WTC11 (cell line): ENCODE measurements at regions of chr13 and their contacts with region 1.

Region 1: GRCh38 chr13:110915057-110915873 is at the start of gene ANKRD10:
- DNase-seq: peak; percentile 99
- ATAC-seq: peak; percentile 93
- H3K4me3 Mint-ChIP-seq: peak within 1 kb of the TSS; percentile 92
- H3K27ac Mint-ChIP-seq: peak within 1 kb of the TSS; percentile 92
- H3K4me1 Mint-ChIP-seq: peaks cover 41% of the 10 kb centered on the region
- H3K27me3 Mint-ChIP-seq: no peaks in the 10 kb centered on the region
- CTCF ChIP-seq: peak; percentile 58; the same call in 1 of the 2 replicates
- total RNA-seq, gene ANKRD10: 176 to 219 TPM (median 191 TPM) in 3 replicates

Region 2: DNA sequence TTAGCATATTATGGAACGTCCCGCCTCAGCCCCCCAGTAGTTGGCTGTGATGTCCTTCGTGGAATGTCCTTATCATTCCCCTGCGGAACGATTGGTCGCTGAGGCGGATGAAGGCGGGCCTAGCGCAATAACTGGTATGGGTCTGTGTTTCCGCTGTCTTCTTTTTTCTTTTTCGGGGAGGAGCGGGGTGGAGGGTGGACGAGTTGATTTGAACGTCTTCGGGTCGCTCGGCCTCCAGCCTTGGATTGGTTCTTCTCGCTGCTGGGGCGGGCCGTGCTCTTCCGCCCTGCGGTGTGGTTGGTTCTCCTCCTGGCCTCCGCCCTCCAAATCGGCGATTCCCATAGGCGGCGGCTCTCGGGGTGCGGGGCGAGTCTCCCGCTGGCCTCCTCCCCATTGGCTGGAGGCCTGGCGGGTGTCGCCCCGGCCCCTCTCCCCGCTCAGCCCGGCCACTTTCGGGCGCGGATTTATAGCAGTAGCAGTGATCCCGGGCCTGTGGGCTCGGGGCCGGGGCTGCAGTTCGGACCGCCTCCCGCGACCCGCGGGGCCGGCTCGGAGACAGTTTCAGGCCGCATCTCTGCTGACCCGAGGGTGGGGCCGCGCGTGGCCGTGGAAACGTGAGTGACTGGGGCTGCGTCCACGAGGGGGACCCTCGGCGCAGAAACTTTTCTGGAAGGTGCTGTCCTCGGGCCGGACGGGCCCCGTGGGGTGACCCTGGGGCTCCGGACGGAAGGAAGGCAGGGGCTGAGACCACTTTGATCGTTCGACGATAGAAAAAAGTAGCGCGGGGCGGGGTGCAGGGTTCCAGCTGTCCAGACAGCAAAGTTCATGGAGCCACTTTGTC is 199.7 kb before region 1 on chr13:
- CTCF ChIA-PET with region 1: interaction called, 6 read pairs
- POLR2A ChIA-PET with region 1: interaction called, 16 read pairs
- DNase-seq: peak; percentile 97
- ATAC-seq: peak; percentile 71
- H3K4me3 Mint-ChIP-seq: peak overlapping the region; percentile 96
- H3K27ac Mint-ChIP-seq: peak overlapping the region; percentile 99
- H3K4me1 Mint-ChIP-seq: peaks cover 23% of the 10 kb centered on the region
- H3K27me3 Mint-ChIP-seq: no peaks in the 10 kb centered on the region
- CTCF ChIP-seq: no peak

Region 3: DNA sequence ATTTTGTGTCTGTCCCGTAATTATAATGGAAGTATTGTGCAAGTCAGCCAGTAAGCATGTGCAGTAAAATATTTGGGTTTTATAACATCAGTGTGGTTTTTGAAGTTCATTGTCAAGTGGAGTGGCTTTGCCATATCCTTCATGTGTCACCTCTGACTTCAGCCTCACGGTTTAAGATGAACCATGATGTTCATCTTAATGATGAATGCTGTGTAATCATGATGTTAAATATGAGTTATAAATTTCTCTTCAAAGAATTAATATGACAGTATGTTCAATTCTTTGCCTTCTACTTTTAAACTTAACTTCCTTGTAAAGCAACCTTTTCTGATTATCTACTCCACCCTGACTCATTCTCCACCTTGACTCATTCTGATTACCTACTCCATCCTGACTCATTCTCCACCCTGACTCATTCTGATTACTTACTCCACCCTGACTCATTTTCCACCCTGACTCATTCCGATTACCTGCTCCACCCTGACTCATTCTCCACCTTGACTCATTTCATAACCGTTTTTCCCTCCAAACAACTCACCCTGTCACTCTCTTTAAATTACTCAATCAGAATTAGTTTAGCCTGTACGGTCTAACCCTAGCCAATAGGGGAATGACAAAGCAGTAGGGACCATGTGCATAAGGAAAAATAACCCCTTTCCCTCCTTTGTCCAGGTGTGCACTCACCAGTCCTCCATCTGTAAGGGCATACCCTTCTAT is 49.9 kb after region 1 on chr13:
- CTCF ChIA-PET with region 1: no interaction called
- POLR2A ChIA-PET with region 1: no interaction called
- DNase-seq: no peak
- ATAC-seq: no peak
- H3K4me3 Mint-ChIP-seq: no peak overlapping the region
- H3K27ac Mint-ChIP-seq: no peak overlapping the region
- H3K4me1 Mint-ChIP-seq: no peaks in the 10 kb centered on the region
- H3K27me3 Mint-ChIP-seq: peaks cover 26% of the 10 kb centered on the region
- CTCF ChIP-seq: no peak